Activated CD8-positive, alpha-beta T cell treated with anti-CD3 and anti-CD28 coated beads for 36 hours (primary cell): ENCODE measurements at regions of chr7 and their contacts with region 1.

Region 1: GRCh38 chr7:128097211-128097731 is 66.0 kb upstream of the LRRC4 start:
- DNase-seq: no peak
- ATAC-seq: no peak
- H3K4me3 Mint-ChIP-seq: no peak overlapping the region
- H3K27ac Mint-ChIP-seq: no peak overlapping the region
- H3K4me1 Mint-ChIP-seq: peaks cover 18% of the 10 kb centered on the region
- H3K27me3 Mint-ChIP-seq: no peaks in the 10 kb centered on the region
- CTCF ChIP-seq: no peak

Region 2: GRCh38 chr7:128112781-128113221 is 15.5 kb after region 1 on chr7:
- CTCF ChIA-PET with region 1: interaction called, 3 read pairs
- POLR2A ChIA-PET with region 1: interaction called, 6 read pairs
- intact Hi-C with region 1: loop called (anchors 2 kb)
- DNase-seq: no peak
- ATAC-seq: no peak
- H3K4me3 Mint-ChIP-seq: no peak overlapping the region
- H3K27ac Mint-ChIP-seq: no peak overlapping the region
- H3K4me1 Mint-ChIP-seq: peaks cover 46% of the 10 kb centered on the region
- H3K27me3 Mint-ChIP-seq: no peaks in the 10 kb centered on the region
- CTCF ChIP-seq: no peak